Heart right ventricle (tissue), 16 donors: ENCODE measurements at regions of chr2 and their contacts with region 1.

Region 1: GRCh38 chr2:101419096-101419663 is 31.9 kb upstream of the CREG2 start:
- DNase-seq: peak in 1 of 2 donors; percentile 79
- ATAC-seq: peak; percentile 70 to 91 (median 82)
- H3K4me3 ChIP-seq: no peak overlapping the region
- H3K27ac ChIP-seq: no peak overlapping the region
- H3K4me1 ChIP-seq: peaks cover 0 to 7% (median 0%) of the 10 kb centered on the region in 9 donors
- H3K27me3 ChIP-seq: peaks cover 0 to 6% (median 0%) of the 10 kb centered on the region in 7 donors
- CTCF ChIP-seq: peak; percentile 71 to 87 (median 82)

Region 2: GRCh38 chr2:101518578-101519492 is 99.7 kb after region 1 on chr2:
- intact Hi-C with region 1: loop called in 3 of 10 experiments (anchors 5 to 10 kb)
- DNase-seq: peak; percentile 39 to 66
- ATAC-seq: peak; percentile 68 to 83 (median 79)
- H3K4me3 ChIP-seq: peak overlapping the region in 2 of 10 donors; percentile 21 to 24
- H3K27ac ChIP-seq: peak overlapping the region in 6 of 10 donors; percentile 5 to 64 (median 30)
- H3K4me1 ChIP-seq: peaks cover 0 to 55% (median 30%) of the 10 kb centered on the region in 9 donors
- H3K27me3 ChIP-seq: peaks cover 0 to 22% (median 0%) of the 10 kb centered on the region in 7 donors
- CTCF ChIP-seq: peak in 8 of 9 donors; percentile 22 to 71 (median 50)